Aorta (tissue), 5 donors: ENCODE measurements at regions of chr15 and their contacts with region 1.

Region 1: DNA sequence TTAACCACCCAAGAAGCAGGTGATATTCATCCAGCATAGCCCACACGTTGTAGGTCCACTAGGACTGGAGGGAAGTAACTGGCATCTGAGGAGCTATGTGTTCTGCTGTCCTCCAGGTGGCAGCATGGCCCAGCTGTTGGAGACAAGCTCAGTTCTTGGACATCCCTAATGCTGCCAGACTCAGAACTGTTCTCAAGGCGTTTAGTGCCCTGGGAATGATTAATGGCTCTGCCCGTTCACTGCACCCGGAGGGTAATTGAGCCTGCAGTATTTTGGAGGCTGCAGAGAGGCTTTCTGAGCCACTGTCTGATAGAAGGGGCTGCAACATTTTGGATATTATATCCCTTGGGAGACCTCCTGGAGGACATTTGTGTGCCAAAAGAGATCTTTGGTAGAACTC is 521.2 kb upstream of the SEMA6D start:
- DNase-seq: peak; percentile 84 to 91
- ATAC-seq: peak; percentile 94
- H3K4me3 ChIP-seq: no peak overlapping the region
- H3K27ac ChIP-seq: no peak overlapping the region
- H3K4me1 ChIP-seq: no peaks in the 10 kb centered on the region
- H3K27me3 ChIP-seq: no peaks in the 10 kb centered on the region

Region 2: DNA sequence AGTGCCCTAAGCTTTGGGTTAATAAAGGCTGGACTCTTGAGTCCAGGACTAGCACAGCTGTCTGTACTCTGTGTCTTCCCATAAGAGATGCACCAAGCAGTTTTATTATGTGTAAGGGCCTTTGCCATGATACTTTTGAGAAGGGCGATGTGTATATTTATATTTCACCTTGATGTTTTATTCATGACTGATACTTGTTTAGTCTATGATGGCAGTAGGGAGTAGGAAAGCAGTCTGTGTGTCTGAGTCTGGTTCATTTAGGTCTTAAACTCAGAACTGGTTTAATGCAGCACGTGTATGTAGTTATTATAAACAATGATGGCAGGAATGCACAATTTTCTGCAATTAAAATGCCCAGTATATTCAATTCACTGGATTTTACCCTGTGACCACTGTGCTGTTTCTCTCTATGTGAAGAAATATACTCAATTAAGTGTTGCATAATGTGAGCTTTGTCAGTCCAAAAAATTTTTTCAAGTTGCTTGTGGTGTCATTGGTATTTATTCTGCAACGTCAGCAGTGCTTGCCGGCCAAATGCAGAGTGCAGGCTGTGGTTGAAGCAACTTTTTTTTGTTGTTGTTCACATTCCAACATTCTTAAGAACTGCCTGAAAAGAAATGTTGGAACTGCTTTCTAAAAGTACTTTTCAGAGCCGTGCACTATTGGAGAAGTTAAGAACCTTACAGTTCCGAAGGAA is 97.6 kb after region 1 on chr15:
- intact Hi-C with region 1: no loop called
- DNase-seq: peak in 1 of 2 donors; percentile 84
- ATAC-seq: peak; percentile 92
- H3K4me3 ChIP-seq: no peak overlapping the region
- H3K27ac ChIP-seq: no peak overlapping the region
- H3K4me1 ChIP-seq: no peaks in the 10 kb centered on the region
- H3K27me3 ChIP-seq: no peaks in the 10 kb centered on the region

Region 3: DNA sequence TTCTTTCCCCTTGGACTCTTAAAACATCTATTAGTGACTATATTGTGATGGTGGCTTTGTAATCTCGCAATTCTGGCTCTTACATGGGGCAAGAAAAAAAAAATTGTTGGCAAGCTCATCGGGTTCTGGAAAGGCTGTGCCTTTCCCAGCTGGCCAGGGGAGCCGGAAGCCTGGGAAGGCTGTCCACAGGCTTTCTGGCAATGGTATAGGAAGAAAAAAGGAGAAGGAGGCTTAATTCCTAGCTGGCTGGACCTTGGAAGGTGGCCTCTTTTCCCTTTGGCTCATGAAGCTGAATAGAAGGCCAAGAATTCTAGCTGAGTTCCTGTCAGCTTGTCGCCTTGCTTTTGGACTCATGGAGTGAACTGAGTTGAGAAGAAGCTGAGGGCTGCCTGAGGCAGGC is 277.8 kb after region 1 on chr15:
- intact Hi-C with region 1: loop called in 1 of 2 experiments (anchors 10 kb)
- DNase-seq: peak; percentile 76 to 82
- ATAC-seq: peak; percentile 93
- H3K4me3 ChIP-seq: no peak overlapping the region
- H3K27ac ChIP-seq: peak overlapping the region in 1 of 2 donors; percentile 76
- H3K4me1 ChIP-seq: peaks cover 0 to 19% of the 10 kb centered on the region in 2 donors
- H3K27me3 ChIP-seq: no peaks in the 10 kb centered on the region

Region 4: DNA sequence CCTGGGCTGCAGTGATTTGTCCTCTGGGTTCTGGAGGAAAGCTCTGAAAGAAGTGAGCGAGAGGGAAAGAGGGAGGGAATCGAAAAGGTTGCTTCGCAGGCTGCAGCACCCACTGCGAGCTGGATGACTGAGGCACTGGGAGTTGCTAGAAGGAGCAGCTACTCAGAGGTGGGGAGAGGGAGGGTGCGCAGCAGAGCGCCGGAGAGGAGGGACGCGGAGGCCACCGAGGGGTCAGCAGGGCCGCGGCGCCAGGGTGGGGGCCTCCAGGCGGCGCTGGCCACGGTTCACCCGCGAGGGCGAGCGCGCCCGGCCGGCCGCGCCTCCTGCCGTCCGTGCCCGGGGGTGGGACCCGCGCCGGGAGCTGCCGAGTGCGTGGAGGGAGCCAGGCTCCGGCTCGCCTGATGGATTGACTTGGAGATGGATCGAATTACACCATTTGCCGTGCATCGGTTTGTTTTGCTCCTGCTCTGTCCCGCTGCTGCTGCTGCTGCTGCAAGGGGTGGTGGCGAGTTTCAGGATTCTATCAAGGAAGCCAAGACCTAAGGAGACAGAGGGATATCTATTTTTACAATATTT is 521.1 kb after region 1 on chr15 and contains the start of gene SEMA6D:
- intact Hi-C with region 1: loop called in 1 of 2 experiments (anchors 5 kb)
- DNase-seq: peak; percentile 82 to 91
- ATAC-seq: peak; percentile 90
- H3K4me3 ChIP-seq: peak within 1 kb of the TSS; percentile 84 to 99
- H3K27ac ChIP-seq: peak within 1 kb of the TSS; percentile 62 to 88
- H3K4me1 ChIP-seq: peaks cover 6 to 7% of the 10 kb centered on the region in 2 donors
- H3K27me3 ChIP-seq: no peaks in the 10 kb centered on the region
- total RNA-seq, gene SEMA6D: 9.0 to 22.7 TPM

Region 5: DNA sequence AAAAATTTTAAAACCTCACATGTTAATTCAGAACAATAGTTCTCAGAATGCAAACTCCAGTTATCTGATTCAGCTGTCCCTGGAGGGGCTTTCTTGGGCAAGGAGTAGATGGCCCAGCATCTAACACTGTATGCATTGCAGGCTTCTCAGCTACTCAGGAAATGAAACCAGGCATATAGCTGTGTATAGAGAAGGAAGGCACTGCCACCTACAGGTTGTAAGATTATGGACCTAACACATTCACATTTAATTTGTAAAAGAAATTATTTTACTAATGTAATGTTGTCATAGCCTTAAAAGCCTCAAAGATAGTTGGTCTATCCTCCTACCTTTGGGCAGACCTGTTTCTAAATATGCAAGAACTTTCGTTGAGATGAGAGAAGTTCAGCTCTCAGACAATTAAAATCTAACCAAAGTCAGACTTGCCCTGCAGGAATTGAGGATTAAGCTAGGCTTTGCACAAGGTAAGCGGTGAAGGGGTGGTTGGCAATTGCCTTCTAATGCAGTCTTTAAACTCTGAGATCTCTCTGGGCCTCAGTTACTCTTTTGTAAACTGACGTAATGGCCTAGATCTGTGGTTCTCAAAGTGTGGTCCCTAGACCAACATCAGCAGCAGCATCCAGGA is 792.0 kb after region 1 on chr15:
- intact Hi-C with region 1: loop called (anchors 2 kb)
- DNase-seq: no peak
- ATAC-seq: peak; percentile 87
- H3K4me3 ChIP-seq: no peak overlapping the region
- H3K27ac ChIP-seq: no peak overlapping the region
- H3K4me1 ChIP-seq: no peaks in the 10 kb centered on the region
- H3K27me3 ChIP-seq: no peaks in the 10 kb centered on the region

Region 6: DNA sequence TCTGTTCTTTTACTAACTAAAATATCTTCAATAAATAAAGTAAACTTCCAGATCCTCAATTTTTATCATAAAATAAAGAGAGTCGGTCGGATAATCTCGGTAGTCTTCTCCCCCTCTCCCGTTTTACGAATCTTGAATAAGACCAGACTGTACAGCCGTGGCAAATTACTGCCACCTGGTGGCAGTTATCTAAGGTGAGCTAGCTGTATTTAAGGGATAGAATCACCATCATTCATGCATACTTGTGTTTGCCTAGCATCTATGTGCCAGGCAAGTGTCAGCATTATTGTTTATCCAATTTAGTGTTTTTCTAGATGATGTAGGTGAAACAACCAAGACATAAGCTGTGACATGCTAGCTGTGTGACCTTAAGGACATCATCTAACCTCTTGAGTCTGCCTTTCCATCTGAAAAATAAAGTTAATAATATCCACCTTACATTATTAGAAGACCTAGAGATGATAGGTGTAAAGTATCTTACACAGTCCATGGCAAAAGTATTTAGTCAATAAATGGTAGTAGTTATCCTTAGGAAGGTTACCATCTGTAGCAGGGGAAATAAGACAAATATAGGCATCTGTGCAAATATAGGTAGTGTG is 1156.5 kb after region 1 on chr15:
- intact Hi-C with region 1: loop called (anchors 5 kb)
- DNase-seq: peak in 1 of 2 donors; percentile 57
- ATAC-seq: no peak
- H3K4me3 ChIP-seq: no peak overlapping the region
- H3K27ac ChIP-seq: no peak overlapping the region
- H3K4me1 ChIP-seq: no peaks in the 10 kb centered on the region
- H3K27me3 ChIP-seq: no peaks in the 10 kb centered on the region